ENCODE measurements at regions of chr16 and their contacts with region 1.

Region 1: GRCh38 chr16:47460711-47461597 is at the starts of genes ITFG1 and PHKB:
- DNase-seq: peak; percentile 94 to 98 (median 97)
- ATAC-seq: peak; percentile 97
- H3K4me3 ChIP-seq: peak within 1 kb of the TSS; percentile 94
- H3K4me3 Mint-ChIP-seq: peak within 1 kb of the TSS; percentile 91 to 100 (median 96)
- H3K27ac ChIP-seq: peak within 1 kb of the TSS; percentile 95
- H3K27ac Mint-ChIP-seq: peak within 1 kb of the TSS; percentile 91 to 99 (median 96)
- H3K4me1 ChIP-seq: peaks cover 10 to 21% of the 10 kb centered on the region in 2 donors
- H3K4me1 Mint-ChIP-seq: peaks cover 45 to 79% (median 73%) of the 10 kb centered on the region in 7 donors
- H3K27me3 ChIP-seq: no peaks in the 10 kb centered on the region
- H3K27me3 Mint-ChIP-seq: no peaks in the 10 kb centered on the region
- total RNA-seq, gene ITFG1: 21.7 to 34.3 (median 29.8) TPM
- total RNA-seq, gene PHKB: 48.5 to 82.9 (median 50.7) TPM

Region 2: DNA sequence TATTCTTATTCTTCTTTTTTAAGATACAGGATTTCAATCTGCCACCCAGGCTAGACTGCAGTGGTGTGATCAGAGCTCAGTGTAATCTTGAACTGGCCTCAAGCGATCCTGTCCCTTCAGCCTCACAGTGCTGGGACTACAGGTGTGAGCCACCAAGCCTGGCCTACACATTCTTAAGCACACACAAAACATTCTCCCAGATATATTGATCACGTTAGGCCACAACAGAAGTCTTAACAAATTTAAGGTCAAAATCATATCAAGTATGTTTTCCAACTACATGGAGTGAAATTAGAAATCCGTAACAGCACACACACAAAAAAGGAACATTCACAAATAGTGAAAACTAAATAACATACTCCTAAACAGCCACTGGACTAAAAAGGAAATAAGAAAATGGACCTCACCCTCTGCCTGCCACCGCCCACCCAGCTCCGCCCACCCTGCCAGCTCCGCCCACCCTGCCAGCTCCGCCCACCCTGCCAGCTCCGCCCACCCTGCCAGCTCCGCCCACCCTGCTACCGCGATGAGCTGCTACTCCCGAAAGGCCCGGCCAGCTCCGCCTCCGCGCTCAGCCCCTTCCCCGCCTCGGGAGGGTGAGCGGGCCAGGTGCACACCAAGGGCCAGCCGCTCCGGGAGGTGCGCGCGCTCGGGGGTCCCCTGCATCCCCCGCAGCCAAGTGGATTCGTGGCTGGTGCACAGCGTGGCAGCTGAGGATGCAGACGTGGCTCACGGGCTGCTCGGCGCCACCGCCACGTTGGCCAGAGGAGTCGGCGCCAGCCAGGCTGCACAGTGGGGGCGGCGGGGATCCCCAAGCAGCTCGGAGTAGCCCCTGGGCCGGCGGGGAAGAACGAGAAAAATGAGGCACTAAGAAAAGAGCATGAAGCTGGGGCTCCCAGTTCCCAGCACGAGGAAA is 671.2 kb before region 1 on chr16:
- CTCF ChIA-PET with region 1: no interaction called
- POLR2A ChIA-PET with region 1: no interaction called
- intact Hi-C with region 1: loop called in 1 of 2 experiments (anchors 2 kb)
- DNase-seq: peak; percentile 62 to 81 (median 79)
- ATAC-seq: peak; percentile 99
- H3K4me3 ChIP-seq: peak overlapping the region; percentile 79
- H3K4me3 Mint-ChIP-seq: peak overlapping the region; percentile 77 to 87 (median 84)
- H3K27ac ChIP-seq: peak overlapping the region; percentile 65
- H3K27ac Mint-ChIP-seq: peak overlapping the region; percentile 33 to 92 (median 82)
- H3K4me1 ChIP-seq: peaks cover 0 to 10% of the 10 kb centered on the region in 2 donors
- H3K4me1 Mint-ChIP-seq: peaks cover 5 to 27% (median 24%) of the 10 kb centered on the region in 7 donors
- H3K27me3 ChIP-seq: no peaks in the 10 kb centered on the region
- H3K27me3 Mint-ChIP-seq: peaks cover 0 to 3% (median 0%) of the 10 kb centered on the region in 5 donors

Region 3: GRCh38 chr16:47258874-47259461 is 202.0 kb before region 1 on chr16:
- CTCF ChIA-PET with region 1: no interaction called
- POLR2A ChIA-PET with region 1: no interaction called
- intact Hi-C with region 1: loop called in 1 of 2 experiments (anchors 2 kb)
- DNase-seq: peak in 2 of 9 donors; percentile 1 to 12
- ATAC-seq: no peak
- H3K4me3 ChIP-seq: no peak overlapping the region
- H3K4me3 Mint-ChIP-seq: no peak overlapping the region
- H3K27ac ChIP-seq: no peak overlapping the region
- H3K27ac Mint-ChIP-seq: no peak overlapping the region
- H3K4me1 ChIP-seq: no peaks in the 10 kb centered on the region
- H3K4me1 Mint-ChIP-seq: no peaks in the 10 kb centered on the region
- H3K27me3 ChIP-seq: no peaks in the 10 kb centered on the region
- H3K27me3 Mint-ChIP-seq: no peaks in the 10 kb centered on the region

Region 4: GRCh38 chr16:47699106-47699505 is 238.2 kb after region 1 on chr16:
- CTCF ChIA-PET with region 1: no interaction called
- POLR2A ChIA-PET with region 1: no interaction called
- intact Hi-C with region 1: no loop called
- DNase-seq: no peak
- ATAC-seq: peak; percentile 22
- H3K4me3 ChIP-seq: no peak overlapping the region
- H3K4me3 Mint-ChIP-seq: no peak overlapping the region
- H3K27ac ChIP-seq: no peak overlapping the region
- H3K27ac Mint-ChIP-seq: no peak overlapping the region
- H3K4me1 ChIP-seq: no peaks in the 10 kb centered on the region
- H3K4me1 Mint-ChIP-seq: peaks cover 0 to 9% (median 0%) of the 10 kb centered on the region in 7 donors
- H3K27me3 ChIP-seq: no peaks in the 10 kb centered on the region
- H3K27me3 Mint-ChIP-seq: no peaks in the 10 kb centered on the region

Region 5: DNA sequence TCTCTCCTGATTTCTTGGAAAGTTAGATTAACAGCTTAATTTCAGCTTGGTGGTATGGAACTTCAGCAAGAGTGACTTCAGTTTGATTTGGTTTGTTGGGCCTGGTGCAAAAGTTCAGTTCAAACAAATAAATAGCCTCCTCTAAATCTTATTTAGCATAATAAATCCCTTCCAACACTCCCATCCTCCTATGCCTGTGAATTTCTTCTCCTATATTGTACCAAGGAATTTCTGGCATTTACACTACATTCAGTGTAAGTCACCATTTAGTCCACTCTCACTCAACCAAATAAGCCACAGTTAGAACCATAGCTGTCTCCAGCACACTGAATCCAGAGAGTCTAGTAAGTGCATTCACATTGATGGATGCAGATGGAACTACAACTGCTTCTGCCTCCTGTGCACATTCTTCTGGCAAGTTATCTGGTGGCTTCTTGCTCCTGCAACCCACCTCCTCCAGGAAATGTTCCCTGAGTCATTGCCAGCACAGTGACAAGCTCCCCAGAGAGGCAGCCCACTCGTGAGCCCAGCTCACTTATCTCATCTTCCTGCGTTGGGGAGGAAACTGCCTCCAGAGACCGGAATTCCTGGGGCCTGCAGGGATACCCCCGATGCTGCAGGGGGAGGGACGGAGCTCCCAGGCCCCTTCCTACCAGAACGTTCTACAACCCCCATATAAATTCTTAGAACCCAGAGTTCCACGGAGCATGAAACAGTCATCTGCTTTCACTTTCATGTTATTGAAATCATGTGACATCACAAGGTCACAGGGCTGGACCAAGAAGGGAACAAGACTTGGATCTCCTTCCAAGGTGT is 318.5 kb after region 1 on chr16:
- CTCF ChIA-PET with region 1: no interaction called
- POLR2A ChIA-PET with region 1: no interaction called
- intact Hi-C with region 1: loop called in 1 of 2 experiments (anchors 1 kb)
- DNase-seq: peak in 3 of 9 donors; percentile 2 to 40 (median 18)
- ATAC-seq: peak; percentile 34
- H3K4me3 ChIP-seq: peak overlapping the region; percentile 62
- H3K4me3 Mint-ChIP-seq: peak overlapping the region; percentile 73 to 91 (median 86)
- H3K27ac ChIP-seq: peak overlapping the region; percentile 50
- H3K27ac Mint-ChIP-seq: peak overlapping the region; percentile 24 to 89 (median 76)
- H3K4me1 ChIP-seq: peaks cover 0 to 3% of the 10 kb centered on the region in 2 donors
- H3K4me1 Mint-ChIP-seq: peaks cover 8 to 16% (median 14%) of the 10 kb centered on the region in 7 donors
- H3K27me3 ChIP-seq: no peaks in the 10 kb centered on the region
- H3K27me3 Mint-ChIP-seq: peaks cover 3 to 7% (median 6%) of the 10 kb centered on the region in 5 donors

Region 6: GRCh38 chr16:48100696-48101674 is 640.0 kb after region 1 on chr16:
- CTCF ChIA-PET with region 1: no interaction called
- POLR2A ChIA-PET with region 1: no interaction called
- intact Hi-C with region 1: no loop called
- DNase-seq: peak in 1 of 9 donors; percentile 38
- ATAC-seq: no peak
- H3K4me3 ChIP-seq: no peak overlapping the region
- H3K4me3 Mint-ChIP-seq: no peak overlapping the region
- H3K27ac ChIP-seq: no peak overlapping the region
- H3K27ac Mint-ChIP-seq: no peak overlapping the region
- H3K4me1 ChIP-seq: no peaks in the 10 kb centered on the region
- H3K4me1 Mint-ChIP-seq: peaks cover 0 to 6% (median 0%) of the 10 kb centered on the region in 7 donors
- H3K27me3 ChIP-seq: no peaks in the 10 kb centered on the region
- H3K27me3 Mint-ChIP-seq: peaks cover 3 to 24% (median 13%) of the 10 kb centered on the region in 5 donors

Region 7: GRCh38 chr16:48365581-48366164 is 904.7 kb after region 1 on chr16:
- CTCF ChIA-PET with region 1: no interaction called
- POLR2A ChIA-PET with region 1: no interaction called
- intact Hi-C with region 1: loop called in 1 of 2 experiments (anchors 10 kb)
- DNase-seq: peak; percentile 66 to 86 (median 73)
- ATAC-seq: peak; percentile 95
- H3K4me3 ChIP-seq: peak overlapping the region; percentile 88
- H3K4me3 Mint-ChIP-seq: peak overlapping the region; percentile 83 to 100 (median 94)
- H3K27ac ChIP-seq: peak overlapping the region; percentile 77
- H3K27ac Mint-ChIP-seq: peak overlapping the region; percentile 89 to 100 (median 98)
- H3K4me1 ChIP-seq: peaks cover 14 to 15% of the 10 kb centered on the region in 2 donors
- H3K4me1 Mint-ChIP-seq: peaks cover 24 to 71% (median 54%) of the 10 kb centered on the region in 7 donors
- H3K27me3 ChIP-seq: no peaks in the 10 kb centered on the region
- H3K27me3 Mint-ChIP-seq: no peaks in the 10 kb centered on the region

Measured in naive thymus-derived CD4-positive, alpha-beta T cell (primary cell).